Heart right ventricle (tissue), 16 donors: ENCODE measurements at regions of chr3 and their contacts with region 1.

Region 1: GRCh38 chr3:184354121-184354728 is 7.2 kb downstream of the CLCN2 start:
- DNase-seq: peak in 1 of 2 donors; percentile 61
- ATAC-seq: peak; percentile 29 to 63 (median 50)
- H3K4me3 ChIP-seq: no peak overlapping the region
- H3K27ac ChIP-seq: no peak overlapping the region
- H3K4me1 ChIP-seq: peaks cover 0 to 5% (median 0%) of the 10 kb centered on the region in 9 donors
- H3K27me3 ChIP-seq: no peaks in the 10 kb centered on the region
- CTCF ChIP-seq: peak; percentile 65 to 73 (median 68)

Region 2: GRCh38 chr3:184305577-184305976 is 48.6 kb before region 1 on chr3:
- intact Hi-C with region 1: loop called in 2 of 10 experiments (anchors 5 to 10 kb)
- DNase-seq: no peak
- ATAC-seq: peak in 2 of 8 donors; percentile 10 to 18
- H3K4me3 ChIP-seq: no peak overlapping the region
- H3K27ac ChIP-seq: no peak overlapping the region
- H3K4me1 ChIP-seq: peaks cover 0 to 5% (median 4%) of the 10 kb centered on the region in 9 donors
- H3K27me3 ChIP-seq: no peaks in the 10 kb centered on the region
- CTCF ChIP-seq: peak in 7 of 9 donors; percentile 20 to 43 (median 25)